Caco-2 (cell line): ENCODE measurements at regions of chr5 and their contacts with region 1.

Region 1: DNA sequence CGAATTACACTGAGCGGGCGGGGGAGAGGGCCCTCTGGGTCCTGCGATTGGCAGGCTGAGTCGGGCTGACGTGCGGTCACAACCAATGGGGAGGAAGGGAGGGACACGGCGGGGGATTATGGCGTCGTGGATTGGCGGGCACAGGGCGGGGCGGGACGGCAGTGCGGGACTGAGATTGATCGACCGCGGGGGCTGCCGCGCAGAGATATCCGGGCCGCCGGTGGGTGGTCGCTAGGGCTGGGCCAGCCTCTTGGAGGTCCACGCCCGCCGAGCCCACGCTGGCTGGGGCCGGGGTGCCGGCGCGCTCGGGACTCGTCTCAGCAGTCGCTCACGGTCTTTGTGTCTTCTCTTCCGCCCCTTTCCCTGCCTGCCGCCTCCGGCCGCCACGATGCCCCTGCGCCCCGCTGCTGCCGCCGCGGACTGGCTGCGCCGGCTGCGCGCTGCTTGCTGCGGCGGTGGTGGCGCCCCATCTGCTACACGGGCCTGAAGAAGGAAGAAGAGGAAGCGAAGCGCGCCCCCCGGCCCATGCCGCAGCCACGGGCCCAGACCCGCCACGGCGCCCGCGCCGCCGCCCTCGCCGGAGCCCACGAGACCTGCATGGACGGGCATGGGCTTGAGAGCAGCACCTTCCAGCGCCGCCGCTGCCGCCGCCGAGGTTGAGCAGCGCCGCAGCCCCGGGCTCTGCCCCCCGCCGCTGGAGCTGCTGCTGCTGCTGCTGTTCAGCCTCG is at the start of gene RGMB:
- DNase-seq: peak; percentile 98 to 99
- H3K4me3 ChIP-seq: peak within 1 kb of the TSS; percentile 95
- H3K4me3 Mint-ChIP-seq: peak within 1 kb of the TSS; percentile 82
- H3K27ac Mint-ChIP-seq: peak within 1 kb of the TSS; percentile 87
- H3K4me1 ChIP-seq: peaks cover 14% of the 10 kb centered on the region
- H3K4me1 Mint-ChIP-seq: peaks cover 9% of the 10 kb centered on the region
- H3K27me3 ChIP-seq: no peaks in the 10 kb centered on the region
- H3K27me3 Mint-ChIP-seq: no peaks in the 10 kb centered on the region
- CTCF ChIP-seq: no peak
- total RNA-seq, gene RGMB: 16.4 and 17.8 TPM in 2 replicates

Region 2: GRCh38 chr5:97231025-97231636 is 1542.5 kb before region 1 on chr5:
- CTCF ChIA-PET with region 1: interaction called, 3 read pairs
- POLR2A ChIA-PET with region 1: interaction called, 7 read pairs
- intact Hi-C with region 1: loop called (anchors 10 kb)
- DNase-seq: peak in 1 of 2 experiments; percentile 72
- H3K4me3 ChIP-seq: no peak overlapping the region
- H3K4me3 Mint-ChIP-seq: no peak overlapping the region
- H3K27ac Mint-ChIP-seq: no peak overlapping the region
- H3K4me1 ChIP-seq: no peaks in the 10 kb centered on the region
- H3K4me1 Mint-ChIP-seq: no peaks in the 10 kb centered on the region
- H3K27me3 ChIP-seq: no peaks in the 10 kb centered on the region
- H3K27me3 Mint-ChIP-seq: no peaks in the 10 kb centered on the region
- CTCF ChIP-seq: peak; percentile 77 to 82

Region 3: DNA sequence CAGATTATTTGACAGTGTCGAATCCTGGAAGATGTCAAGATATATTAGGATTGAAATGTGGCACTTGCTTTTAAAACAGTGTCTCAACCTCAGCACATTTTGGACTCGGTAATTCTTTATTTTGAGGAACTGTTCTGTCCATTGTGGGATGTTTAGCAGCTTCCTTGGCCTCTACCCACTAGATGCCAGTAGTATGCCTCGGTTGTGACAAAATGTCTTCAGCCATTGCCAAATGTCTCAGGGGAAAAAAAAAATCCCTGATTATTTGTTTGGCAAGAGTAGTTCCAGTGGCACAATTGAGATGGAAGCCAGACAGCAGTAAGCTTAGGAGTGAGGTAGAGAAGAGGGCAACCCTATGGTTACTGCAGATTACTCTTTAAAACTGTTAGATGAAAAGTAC is 896.0 kb before region 1 on chr5:
- CTCF ChIA-PET with region 1: no interaction called
- POLR2A ChIA-PET with region 1: no interaction called
- intact Hi-C with region 1: loop called (anchors 10 kb)
- DNase-seq: no peak
- H3K4me3 ChIP-seq: no peak overlapping the region
- H3K4me3 Mint-ChIP-seq: no peak overlapping the region
- H3K27ac Mint-ChIP-seq: no peak overlapping the region
- H3K4me1 ChIP-seq: no peaks in the 10 kb centered on the region
- H3K4me1 Mint-ChIP-seq: no peaks in the 10 kb centered on the region
- H3K27me3 ChIP-seq: no peaks in the 10 kb centered on the region
- H3K27me3 Mint-ChIP-seq: no peaks in the 10 kb centered on the region
- CTCF ChIP-seq: no peak

Region 4: DNA sequence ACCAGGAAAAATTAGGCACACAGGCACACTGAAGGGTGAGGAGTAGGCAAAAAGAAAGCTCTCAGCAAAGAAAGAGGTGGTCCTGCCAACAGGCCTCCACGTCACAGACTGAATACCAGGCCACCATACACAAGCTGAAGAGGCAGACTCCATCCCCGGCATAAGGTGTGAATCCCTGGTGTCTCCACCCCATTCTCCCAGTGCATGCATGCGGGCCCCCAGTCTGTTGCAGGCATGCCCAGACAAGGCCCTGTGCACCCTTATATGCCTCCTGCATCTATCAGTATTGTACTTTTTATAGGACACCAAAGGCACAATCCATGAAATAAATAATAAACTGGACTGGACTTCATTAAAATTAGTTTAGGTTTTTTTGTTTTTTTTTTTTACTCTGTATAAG is 72.9 kb after region 1 on chr5:
- CTCF ChIA-PET with region 1: no interaction called
- POLR2A ChIA-PET with region 1: no interaction called
- intact Hi-C with region 1: loop called (anchors 2 kb)
- DNase-seq: peak; percentile 29 to 50
- H3K4me3 ChIP-seq: no peak overlapping the region
- H3K4me3 Mint-ChIP-seq: no peak overlapping the region
- H3K27ac Mint-ChIP-seq: peak overlapping the region; percentile 67
- H3K4me1 ChIP-seq: peaks cover 24% of the 10 kb centered on the region
- H3K4me1 Mint-ChIP-seq: peaks cover 21% of the 10 kb centered on the region
- H3K27me3 ChIP-seq: no peaks in the 10 kb centered on the region
- H3K27me3 Mint-ChIP-seq: no peaks in the 10 kb centered on the region
- CTCF ChIP-seq: no peak

Region 5: DNA sequence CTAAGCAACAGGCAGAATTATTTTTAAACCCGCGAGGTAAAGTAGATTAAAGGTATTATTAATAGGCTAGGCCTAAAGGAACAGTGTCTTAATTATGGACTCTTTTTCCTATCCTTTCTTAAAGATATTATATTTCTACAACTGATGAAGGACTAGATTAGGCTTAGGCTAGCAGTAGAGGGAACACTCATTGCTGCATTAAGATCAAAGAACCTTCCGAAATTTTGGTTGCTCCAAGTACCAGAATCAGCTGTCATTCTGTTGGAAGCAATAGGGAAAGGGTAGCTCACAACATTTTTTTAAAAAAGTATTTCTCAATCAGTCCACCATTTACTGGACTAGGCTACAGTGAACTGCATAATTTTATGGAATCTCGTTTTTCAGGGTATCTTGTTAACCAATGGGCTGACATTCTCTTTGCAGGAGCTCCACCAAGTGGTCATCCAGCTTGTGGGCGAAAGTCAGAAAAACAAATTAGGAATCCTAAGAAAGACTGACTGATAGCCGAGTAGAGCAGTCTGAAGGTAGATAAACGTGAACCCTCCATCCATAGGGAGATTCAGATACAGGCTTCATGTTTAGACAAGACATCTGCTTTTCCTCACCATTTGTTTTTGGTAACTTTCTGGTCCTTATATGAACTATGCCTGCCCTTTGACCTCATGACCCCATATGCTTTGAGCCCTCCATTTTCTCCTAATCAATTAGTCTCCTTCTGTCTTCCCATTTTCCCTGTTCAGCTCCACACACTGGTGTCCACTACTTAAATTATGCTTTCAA is 258.8 kb after region 1 on chr5:
- CTCF ChIA-PET with region 1: no interaction called
- POLR2A ChIA-PET with region 1: no interaction called
- intact Hi-C with region 1: loop called (anchors 2 kb)
- DNase-seq: peak; percentile 70 to 75
- H3K4me3 ChIP-seq: no peak overlapping the region
- H3K4me3 Mint-ChIP-seq: no peak overlapping the region
- H3K27ac Mint-ChIP-seq: no peak overlapping the region
- H3K4me1 ChIP-seq: peaks cover 13% of the 10 kb centered on the region
- H3K4me1 Mint-ChIP-seq: peaks cover 23% of the 10 kb centered on the region
- H3K27me3 ChIP-seq: no peaks in the 10 kb centered on the region
- H3K27me3 Mint-ChIP-seq: no peaks in the 10 kb centered on the region
- CTCF ChIP-seq: peak; percentile 71 to 87